ENCODE measurements at regions of chr19 and their contacts with region 1.

Region 1: DNA sequence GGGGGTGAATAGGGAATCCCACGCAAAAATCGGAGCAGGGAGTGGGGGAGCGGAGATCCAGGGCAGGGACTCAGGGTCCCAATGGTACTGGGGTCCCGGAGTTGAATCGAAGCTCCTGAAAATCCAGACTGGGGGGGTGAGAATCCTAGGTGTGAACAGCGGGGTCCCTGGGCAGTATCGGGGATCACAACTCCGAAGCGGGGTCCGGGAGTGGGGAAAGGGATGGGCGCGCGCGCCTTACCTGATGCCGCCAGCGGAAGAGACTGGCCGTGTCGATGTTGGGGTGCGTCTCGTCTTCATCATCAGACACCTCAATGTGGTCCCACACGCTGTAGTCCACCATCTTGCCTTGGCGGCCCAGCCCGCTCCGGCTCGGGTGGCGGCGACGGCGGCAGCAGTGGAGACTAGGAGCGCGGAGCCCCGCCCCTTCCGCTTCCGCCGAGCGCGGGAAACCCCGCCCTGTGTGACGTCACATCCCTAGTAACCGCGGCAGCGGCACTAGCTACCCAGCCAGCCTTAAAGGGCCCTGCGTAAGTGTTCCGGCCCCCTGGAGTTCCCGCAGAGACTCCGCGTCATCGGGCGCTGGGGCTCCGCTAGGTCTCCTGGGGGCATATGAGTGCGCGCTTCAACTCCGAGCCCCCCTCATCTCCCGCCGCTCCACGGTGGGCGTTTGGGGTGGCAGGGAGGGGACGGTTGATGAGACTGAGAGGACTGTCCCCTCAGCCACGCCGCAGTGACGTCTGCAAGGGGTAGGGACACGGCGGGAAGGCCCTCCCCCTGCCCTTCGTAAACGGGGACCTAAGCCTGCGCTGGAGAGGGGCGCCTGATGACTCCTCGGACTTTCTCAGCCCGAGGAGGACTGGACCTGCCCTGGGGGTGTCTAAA is at the start of gene CDC37:
- DNase-seq: peak; percentile 99
- ATAC-seq: peak; percentile 80
- H3K4me3 Mint-ChIP-seq: peak within 1 kb of the TSS; percentile 95
- H3K27ac Mint-ChIP-seq: peak within 1 kb of the TSS; percentile 85
- H3K4me1 Mint-ChIP-seq: peaks cover 75% of the 10 kb centered on the region
- H3K27me3 Mint-ChIP-seq: no peaks in the 10 kb centered on the region
- CTCF ChIP-seq: no peak
- total RNA-seq, gene CDC37: 172 and 173 TPM in 2 replicates

Region 2: GRCh38 chr19:10388957-10389356 is 14.4 kb before region 1 on chr19:
- CTCF ChIA-PET with region 1: interaction called, 6 read pairs
- POLR2A ChIA-PET with region 1: interaction called, 11 read pairs
- intact Hi-C with region 1: no loop called
- DNase-seq: peak; percentile 77
- ATAC-seq: peak; percentile 56
- H3K4me3 Mint-ChIP-seq: no peak overlapping the region
- H3K27ac Mint-ChIP-seq: peak overlapping the region; percentile 35
- H3K4me1 Mint-ChIP-seq: peaks cover 23% of the 10 kb centered on the region
- H3K27me3 Mint-ChIP-seq: no peaks in the 10 kb centered on the region
- CTCF ChIP-seq: peak; percentile 92

Region 3: GRCh38 chr19:10431943-10432735 is 28.8 kb after region 1 on chr19:
- CTCF ChIA-PET with region 1: interaction called, 58 read pairs
- POLR2A ChIA-PET with region 1: interaction called, 541 read pairs
- intact Hi-C with region 1: loop called (anchors 1 kb)
- DNase-seq: peak; percentile 73
- ATAC-seq: peak; percentile 51
- H3K4me3 Mint-ChIP-seq: peak overlapping the region; percentile 88
- H3K27ac Mint-ChIP-seq: peak overlapping the region; percentile 74
- H3K4me1 Mint-ChIP-seq: peaks cover 61% of the 10 kb centered on the region
- H3K27me3 Mint-ChIP-seq: peaks cover 6% of the 10 kb centered on the region
- CTCF ChIP-seq: no peak

Region 4: DNA sequence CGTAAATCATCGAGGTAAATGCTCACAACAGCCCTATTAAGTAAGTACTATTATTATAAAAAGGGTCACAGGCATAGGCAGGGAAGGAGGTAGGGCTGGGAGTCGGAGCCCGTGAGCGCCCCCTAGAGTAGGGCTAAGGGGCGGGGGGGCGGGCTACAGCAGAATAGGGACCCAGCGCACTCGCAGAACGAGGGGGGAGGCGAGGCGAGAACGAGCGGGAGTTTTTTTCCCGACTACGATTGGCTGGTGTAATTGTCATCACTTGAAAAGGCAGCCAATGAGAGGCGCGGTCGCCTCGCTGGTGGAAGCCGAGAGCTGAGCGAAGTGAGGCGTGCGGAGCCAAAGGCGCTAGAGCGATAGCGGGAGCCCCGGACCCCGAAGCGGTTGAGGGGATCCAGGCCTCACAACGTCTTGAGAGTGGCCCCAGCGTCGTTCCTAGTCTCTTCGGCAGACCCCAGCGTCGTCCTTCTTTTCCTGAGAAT is 75.6 kb after region 1 on chr19:
- CTCF ChIA-PET with region 1: interaction called, 5 read pairs
- POLR2A ChIA-PET with region 1: no interaction called
- intact Hi-C with region 1: loop called (anchors 1 kb)
- DNase-seq: peak; percentile 59
- ATAC-seq: peak; percentile 97
- H3K4me3 Mint-ChIP-seq: peak overlapping the region; percentile 32
- H3K27ac Mint-ChIP-seq: no peak overlapping the region
- H3K4me1 Mint-ChIP-seq: peaks cover 16% of the 10 kb centered on the region
- H3K27me3 Mint-ChIP-seq: no peaks in the 10 kb centered on the region
- CTCF ChIP-seq: no peak

Region 5: GRCh38 chr19:10510301-10510802 is 107.0 kb after region 1 on chr19:
- CTCF ChIA-PET with region 1: no interaction called
- POLR2A ChIA-PET with region 1: no interaction called
- intact Hi-C with region 1: no loop called
- DNase-seq: peak; percentile 61
- ATAC-seq: peak; percentile 38
- H3K4me3 Mint-ChIP-seq: no peak overlapping the region
- H3K27ac Mint-ChIP-seq: no peak overlapping the region
- H3K4me1 Mint-ChIP-seq: peaks cover 13% of the 10 kb centered on the region
- H3K27me3 Mint-ChIP-seq: peaks cover 16% of the 10 kb centered on the region
- CTCF ChIP-seq: peak; percentile 35

Region 6: GRCh38 chr19:10653715-10654492 is 250.5 kb after region 1 on chr19 and contains the start of gene ILF3:
- CTCF ChIA-PET with region 1: interaction called, 5 read pairs
- POLR2A ChIA-PET with region 1: no interaction called
- intact Hi-C with region 1: loop called (anchors 5 kb)
- DNase-seq: peak; percentile 98
- ATAC-seq: peak; percentile 78
- H3K4me3 Mint-ChIP-seq: peak within 1 kb of the TSS; percentile 95
- H3K27ac Mint-ChIP-seq: peak within 1 kb of the TSS; percentile 99
- H3K4me1 Mint-ChIP-seq: peaks cover 48% of the 10 kb centered on the region
- H3K27me3 Mint-ChIP-seq: peaks cover 1% of the 10 kb centered on the region
- CTCF ChIP-seq: no peak
- total RNA-seq, gene ILF3: 373 and 399 TPM in 2 replicates